ENCODE measurements at regions of chr20 and their contacts with region 1.

Region 1: DNA sequence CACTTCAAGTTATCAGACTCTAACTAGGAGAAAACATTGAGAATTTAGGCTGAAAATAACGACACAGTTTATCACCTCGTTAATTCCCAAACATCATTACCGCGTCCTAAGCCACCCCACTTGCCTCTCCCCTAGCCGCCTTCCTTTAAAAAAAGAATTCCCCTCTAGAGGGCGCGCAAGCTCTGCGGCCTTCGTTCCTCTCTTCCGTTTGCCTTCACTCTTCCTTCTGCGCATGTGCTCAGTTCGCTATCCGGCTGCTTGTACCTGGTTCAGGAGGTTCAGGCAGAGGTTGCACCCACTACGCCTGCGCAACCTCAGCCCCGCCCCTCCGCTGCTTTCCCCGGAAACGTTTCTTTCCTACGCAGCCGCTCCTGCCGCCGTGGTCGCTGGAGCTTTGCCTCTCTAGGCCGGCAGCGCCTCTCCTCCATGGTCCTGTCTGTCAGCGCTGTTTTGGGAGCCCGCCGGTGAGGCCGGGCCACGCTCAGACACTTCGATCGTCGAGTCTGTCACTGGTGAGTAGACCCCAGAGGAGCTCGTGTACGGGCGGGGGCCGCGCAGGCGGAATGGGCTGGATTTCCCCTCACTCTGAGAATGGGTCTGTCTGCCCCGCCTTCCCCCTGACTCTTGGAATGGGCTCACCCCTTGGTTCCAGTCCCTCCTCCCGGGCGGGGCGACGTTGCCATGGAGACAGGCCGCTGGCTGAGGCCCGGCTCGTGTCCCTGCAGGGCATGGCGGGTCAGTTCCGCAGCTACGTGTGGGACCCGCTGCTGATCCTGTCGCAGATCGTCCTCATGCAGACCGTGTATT is at the start of gene SYS1:
- DNase-seq: peak; percentile 90
- H3K4me3 ChIP-seq: peak within 1 kb of the TSS; percentile 96
- CTCF ChIP-seq: peak; percentile 87

Region 2: GRCh38 chr20:45336530-45337366 is 26.3 kb before region 1 on chr20:
- CTCF ChIA-PET with region 1: interaction called, 19 read pairs
- POLR2A ChIA-PET with region 1: interaction called, 19 read pairs
- DNase-seq: peak; percentile 77
- H3K4me3 ChIP-seq: no peak overlapping the region
- CTCF ChIP-seq: no peak

Region 3: DNA sequence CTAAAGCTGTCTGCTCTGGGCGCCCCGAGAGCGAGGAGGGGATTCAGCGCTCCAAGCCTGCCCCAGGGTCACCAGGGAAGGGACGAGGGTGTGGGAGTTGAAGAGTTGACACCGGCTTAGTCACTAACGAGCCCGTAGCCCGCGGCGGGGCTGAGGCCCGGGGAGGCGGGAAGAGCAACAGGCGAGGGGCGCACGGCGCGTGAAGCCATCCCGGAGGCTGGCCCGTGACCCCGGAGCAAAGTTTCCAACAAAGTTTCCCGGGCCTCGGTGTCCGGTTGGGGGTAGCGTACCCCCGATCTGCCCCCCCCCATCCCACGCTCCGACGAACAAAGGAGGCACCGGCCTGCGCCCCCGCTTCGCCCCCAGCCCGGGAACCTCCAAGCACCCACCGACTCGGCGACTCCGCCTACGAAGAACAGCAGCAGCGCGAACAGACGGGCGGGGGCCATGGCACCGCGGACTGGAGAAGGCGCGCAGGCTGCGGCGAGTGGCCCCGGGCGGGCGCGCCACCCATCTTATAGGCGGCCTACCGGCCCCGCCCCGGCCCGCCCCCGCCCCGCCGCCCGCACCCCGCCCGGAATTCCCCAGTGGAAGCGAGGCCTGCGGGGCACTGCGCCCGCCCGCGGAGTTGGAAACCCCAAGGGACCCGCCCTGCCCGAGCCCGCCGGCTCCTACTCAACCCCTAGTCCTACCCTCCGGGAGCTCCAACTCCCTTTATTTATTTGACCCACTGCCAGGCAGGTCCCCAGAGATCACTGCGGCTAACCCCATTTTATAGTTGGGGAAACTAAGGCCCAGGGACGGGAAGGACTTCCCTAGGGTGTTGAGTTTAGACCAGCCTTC is 14.8 kb before region 1 on chr20 and contains the start of gene SDC4:
- CTCF ChIA-PET with region 1: interaction called, 60 read pairs
- POLR2A ChIA-PET with region 1: interaction called, 86 read pairs
- DNase-seq: no peak
- H3K4me3 ChIP-seq: peak within 1 kb of the TSS; percentile 84
- CTCF ChIP-seq: no peak

Region 4: DNA sequence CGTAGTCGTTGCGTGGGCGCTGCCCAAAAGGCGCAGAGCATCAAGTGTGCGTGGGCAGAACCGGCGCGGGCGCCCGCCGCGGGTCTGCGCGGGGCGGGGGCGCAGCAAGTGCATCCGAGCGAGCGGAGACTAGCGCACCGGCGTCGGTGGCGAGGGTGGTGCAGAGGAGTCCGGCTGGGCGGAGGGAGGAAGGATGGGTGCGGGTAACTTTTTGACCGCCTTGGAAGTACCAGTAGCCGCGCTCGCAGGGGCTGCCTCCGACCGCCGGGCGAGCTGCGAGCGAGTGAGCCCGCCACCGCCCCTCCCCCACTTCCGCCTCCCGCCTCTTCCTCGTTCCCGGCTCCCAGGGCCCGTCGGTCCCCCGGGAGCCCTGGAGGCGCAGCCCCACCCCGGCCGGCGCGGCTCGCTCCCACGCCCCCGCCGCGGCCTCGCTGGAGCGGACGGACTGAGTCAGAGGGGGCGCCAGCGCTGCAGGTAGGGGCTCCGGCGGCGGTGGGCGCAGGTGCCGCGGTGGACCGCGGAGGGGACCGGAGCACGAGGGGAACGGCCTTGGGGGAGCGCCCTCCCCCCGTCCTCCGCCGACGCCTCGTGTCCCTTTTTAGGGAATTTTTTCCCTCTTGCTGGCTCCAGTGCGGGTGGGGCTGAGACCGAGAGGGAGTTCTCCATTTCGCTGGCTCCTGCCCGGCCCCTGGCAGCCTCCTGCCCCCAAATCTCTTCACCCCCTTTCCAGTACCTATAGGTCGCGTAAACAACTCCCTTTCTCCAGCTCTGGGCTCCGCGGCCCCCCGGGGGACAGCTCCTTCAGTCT is 43.5 kb after region 1 on chr20:
- CTCF ChIA-PET with region 1: interaction called, 14 read pairs
- POLR2A ChIA-PET with region 1: interaction called, 6 read pairs
- DNase-seq: no peak
- H3K4me3 ChIP-seq: peak overlapping the region; percentile 66
- CTCF ChIP-seq: no peak

Region 5: DNA sequence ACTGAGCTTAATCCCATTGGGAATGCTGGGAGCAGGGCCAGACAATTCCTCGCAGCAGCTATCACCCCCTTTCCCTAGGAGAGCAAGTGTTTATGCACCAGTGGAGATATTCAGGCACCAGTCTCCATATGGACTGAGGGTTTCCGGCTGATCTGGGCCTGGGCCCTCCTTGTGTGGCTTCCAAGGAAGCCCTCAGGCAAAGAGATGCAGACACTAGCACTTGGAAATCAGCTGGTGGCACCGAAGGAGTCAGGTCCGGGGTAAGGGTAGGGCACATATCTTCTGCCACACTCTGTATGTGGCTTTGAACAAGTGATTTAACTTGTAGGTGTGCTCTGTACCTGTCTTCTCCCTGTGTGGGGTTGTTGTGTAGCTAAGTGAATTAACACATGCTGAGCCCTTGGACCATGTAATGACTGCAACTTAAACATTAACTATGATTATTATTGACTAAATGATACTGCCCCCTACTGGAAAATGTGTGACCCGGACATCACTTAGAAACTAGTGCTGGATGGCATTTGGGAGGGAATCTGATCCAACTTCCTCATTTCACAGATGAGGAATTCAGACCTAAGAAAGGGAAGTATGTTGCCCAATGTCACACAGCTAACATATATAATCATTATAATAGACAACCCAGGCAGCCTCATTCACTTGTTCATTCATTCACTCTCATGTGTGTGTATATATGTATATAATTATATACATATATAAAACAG is 87.3 kb after region 1 on chr20:
- CTCF ChIA-PET with region 1: interaction called, 10 read pairs
- POLR2A ChIA-PET with region 1: no interaction called
- DNase-seq: no peak
- H3K4me3 ChIP-seq: no peak overlapping the region
- CTCF ChIP-seq: peak; percentile 49